ENCODE measurements at regions of chr2 and their contacts with region 1.

Region 1: GRCh38 chr2:231399853-231400680 is 4.6 kb downstream of the B3GNT7 start:
- DNase-seq: peak in 2 of 3 donors; percentile 54 to 76
- ATAC-seq: peak; percentile 83 to 89 (median 89)
- H3K4me3 ChIP-seq: peak overlapping the region in 2 of 3 donors; percentile 7 to 24
- H3K27ac ChIP-seq: peak overlapping the region in 1 of 3 donors; percentile 20
- H3K4me1 ChIP-seq: peaks cover 0 to 6% (median 0%) of the 10 kb centered on the region in 4 donors
- H3K27me3 ChIP-seq: no peaks in the 10 kb centered on the region
- CTCF ChIP-seq: no peak
- POLR2A ChIP-seq: no peak

Region 2: GRCh38 chr2:231104115-231104713 is 295.9 kb before region 1 on chr2:
- intact Hi-C with region 1: no loop called
- DNase-seq: no peak
- ATAC-seq: peak; percentile 87 to 94 (median 89)
- H3K4me3 ChIP-seq: no peak overlapping the region
- H3K27ac ChIP-seq: no peak overlapping the region
- H3K4me1 ChIP-seq: peaks cover 0 to 8% (median 0%) of the 10 kb centered on the region in 4 donors
- H3K27me3 ChIP-seq: no peaks in the 10 kb centered on the region
- CTCF ChIP-seq: peak; percentile 72 to 88 (median 80)
- POLR2A ChIP-seq: no peak

Region 3: GRCh38 chr2:231297108-231297908 is 102.8 kb before region 1 on chr2:
- intact Hi-C with region 1: loop called in 1 of 2 experiments (anchors 10 kb)
- DNase-seq: peak; percentile 59 to 69 (median 61)
- ATAC-seq: peak; percentile 89 to 93 (median 90)
- H3K4me3 ChIP-seq: no peak overlapping the region
- H3K27ac ChIP-seq: no peak overlapping the region
- H3K4me1 ChIP-seq: no peaks in the 10 kb centered on the region
- H3K27me3 ChIP-seq: no peaks in the 10 kb centered on the region
- CTCF ChIP-seq: peak; percentile 62 to 74 (median 67)
- POLR2A ChIP-seq: no peak

Region 4: GRCh38 chr2:231573698-231574421 is 173.8 kb after region 1 on chr2:
- intact Hi-C with region 1: no loop called
- DNase-seq: no peak
- ATAC-seq: peak in 1 of 4 donors; percentile 19
- H3K4me3 ChIP-seq: no peak overlapping the region
- H3K27ac ChIP-seq: no peak overlapping the region
- H3K4me1 ChIP-seq: no peaks in the 10 kb centered on the region
- H3K27me3 ChIP-seq: no peaks in the 10 kb centered on the region
- CTCF ChIP-seq: no peak
- POLR2A ChIP-seq: no peak

Region 5: GRCh38 chr2:231604685-231605606 is 204.9 kb after region 1 on chr2:
- intact Hi-C with region 1: no loop called
- DNase-seq: peak; percentile 99 to 100 (median 99)
- ATAC-seq: peak; percentile 89 to 96 (median 92)
- H3K4me3 ChIP-seq: peak overlapping the region; percentile 30 to 67 (median 51)
- H3K27ac ChIP-seq: peak overlapping the region; percentile 77 to 84 (median 83)
- H3K4me1 ChIP-seq: peaks cover 0 to 7% (median 0%) of the 10 kb centered on the region in 4 donors
- H3K27me3 ChIP-seq: no peaks in the 10 kb centered on the region
- CTCF ChIP-seq: no peak
- POLR2A ChIP-seq: no peak